ENCODE measurements at regions of chr7 and their contacts with region 1.

Region 1: GRCh38 chr7:25894902-25895791 is 256.9 kb upstream of the NFE2L3 start:
- DNase-seq: peak; percentile 17
- H3K4me3 ChIP-seq: no peak overlapping the region
- H3K27ac ChIP-seq: no peak overlapping the region
- H3K4me1 ChIP-seq: peaks cover 27% of the 10 kb centered on the region
- H3K27me3 ChIP-seq: no peaks in the 10 kb centered on the region
- CTCF ChIP-seq: peak; percentile 46 to 65

Region 2: DNA sequence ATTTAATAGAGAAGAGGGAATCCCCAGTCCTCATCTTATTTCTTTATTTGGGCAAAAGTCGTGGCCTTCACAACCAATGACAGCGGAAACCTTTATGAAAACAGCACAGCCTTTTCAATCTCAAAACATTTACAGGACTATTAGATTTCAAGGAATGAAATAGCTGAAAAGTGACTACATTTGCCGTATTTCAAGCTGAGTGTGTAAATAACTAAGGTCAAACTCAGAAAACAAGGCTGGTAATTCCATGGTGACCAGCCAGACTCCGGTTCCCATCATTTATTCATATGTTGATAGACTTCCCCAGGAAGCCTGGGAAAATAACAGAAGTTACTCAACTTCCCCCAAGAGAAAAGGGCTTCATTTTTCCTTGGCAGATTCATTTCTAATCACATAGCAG is 200.4 kb before region 1 on chr7:
- CTCF ChIA-PET with region 1: no interaction called
- dilution Hi-C with region 1: no loop called
- in situ Hi-C with region 1: no loop called
- intact Hi-C with region 1: no loop called
- DNase-seq: no peak
- H3K4me3 ChIP-seq: no peak overlapping the region
- H3K27ac ChIP-seq: no peak overlapping the region
- H3K4me1 ChIP-seq: no peaks in the 10 kb centered on the region
- H3K27me3 ChIP-seq: no peaks in the 10 kb centered on the region
- CTCF ChIP-seq: no peak

Region 3: DNA sequence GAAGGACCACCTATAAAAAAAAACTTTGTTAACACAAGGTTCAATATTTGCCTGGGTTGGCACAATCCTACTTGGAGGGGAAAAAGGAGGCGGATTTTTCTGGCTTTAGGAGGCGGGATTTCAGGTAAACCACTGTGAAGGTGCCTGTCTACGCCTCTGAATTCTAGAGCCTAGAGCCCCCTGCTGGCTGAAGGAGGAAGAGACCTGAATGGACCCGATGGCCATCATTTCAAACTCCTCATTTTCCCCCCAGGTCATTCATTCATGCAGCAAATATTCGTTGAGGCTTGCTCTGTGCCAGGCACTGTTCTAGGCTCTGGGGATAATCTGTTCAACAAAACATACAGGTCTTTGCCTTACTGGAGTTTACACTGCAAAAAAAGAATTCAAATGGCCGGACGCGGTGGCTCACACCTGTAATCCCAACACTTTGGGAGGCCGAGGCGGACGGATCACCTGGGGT is 166.6 kb after region 1 on chr7:
- CTCF ChIA-PET with region 1: no interaction called
- dilution Hi-C with region 1: no loop called
- in situ Hi-C with region 1: no loop called
- intact Hi-C with region 1: loop called (anchors 1 kb)
- DNase-seq: peak; percentile 56
- H3K4me3 ChIP-seq: no peak overlapping the region
- H3K27ac ChIP-seq: no peak overlapping the region
- H3K4me1 ChIP-seq: peaks cover 4% of the 10 kb centered on the region
- H3K27me3 ChIP-seq: no peaks in the 10 kb centered on the region
- CTCF ChIP-seq: peak; percentile 85 to 92

Region 4: DNA sequence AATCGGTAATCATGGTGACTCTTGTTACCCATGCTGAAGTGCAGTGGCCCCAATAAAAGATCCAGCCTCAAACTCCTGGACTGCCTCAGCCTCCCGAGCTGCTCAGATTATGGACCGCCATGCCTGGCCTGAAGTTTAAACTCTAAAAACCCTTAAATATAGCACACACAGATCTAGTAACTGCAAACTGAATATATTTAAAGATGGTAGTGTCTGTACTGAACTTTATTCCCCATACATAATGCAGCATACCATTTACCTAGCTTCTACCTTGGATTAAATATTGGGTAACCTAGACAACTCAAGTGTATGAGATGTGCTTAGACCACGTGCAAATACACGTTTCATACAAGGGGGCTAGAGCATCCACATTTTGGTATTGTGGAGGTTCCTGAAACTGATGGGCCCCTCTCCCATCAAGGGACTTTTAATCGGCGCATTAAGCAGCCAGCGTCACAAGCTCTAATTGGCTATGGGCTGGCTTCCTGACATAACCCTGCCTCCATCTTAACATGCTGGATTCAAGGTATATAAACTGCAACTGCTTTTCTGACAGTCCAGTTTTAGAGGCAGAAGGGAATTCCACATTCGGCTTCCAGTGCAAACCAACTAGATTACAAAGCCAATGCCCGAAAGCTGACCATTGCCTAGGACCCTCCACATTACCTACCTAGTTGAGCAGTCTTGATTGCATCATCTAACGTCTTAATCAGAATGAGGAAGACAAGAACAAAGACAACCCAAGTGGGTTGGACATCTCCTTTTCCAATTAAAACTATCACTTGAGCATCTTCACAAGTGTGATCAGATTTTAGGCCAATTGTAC is 292.4 kb after region 1 on chr7:
- CTCF ChIA-PET with region 1: no interaction called
- dilution Hi-C with region 1: no loop called
- in situ Hi-C with region 1: loop called in 1 of 2 experiments (anchors 10 kb)
- intact Hi-C with region 1: loop called (anchors 5 kb)
- DNase-seq: no peak
- H3K4me3 ChIP-seq: no peak overlapping the region
- H3K27ac ChIP-seq: no peak overlapping the region
- H3K4me1 ChIP-seq: no peaks in the 10 kb centered on the region
- H3K27me3 ChIP-seq: no peaks in the 10 kb centered on the region
- CTCF ChIP-seq: no peak

Region 5: DNA sequence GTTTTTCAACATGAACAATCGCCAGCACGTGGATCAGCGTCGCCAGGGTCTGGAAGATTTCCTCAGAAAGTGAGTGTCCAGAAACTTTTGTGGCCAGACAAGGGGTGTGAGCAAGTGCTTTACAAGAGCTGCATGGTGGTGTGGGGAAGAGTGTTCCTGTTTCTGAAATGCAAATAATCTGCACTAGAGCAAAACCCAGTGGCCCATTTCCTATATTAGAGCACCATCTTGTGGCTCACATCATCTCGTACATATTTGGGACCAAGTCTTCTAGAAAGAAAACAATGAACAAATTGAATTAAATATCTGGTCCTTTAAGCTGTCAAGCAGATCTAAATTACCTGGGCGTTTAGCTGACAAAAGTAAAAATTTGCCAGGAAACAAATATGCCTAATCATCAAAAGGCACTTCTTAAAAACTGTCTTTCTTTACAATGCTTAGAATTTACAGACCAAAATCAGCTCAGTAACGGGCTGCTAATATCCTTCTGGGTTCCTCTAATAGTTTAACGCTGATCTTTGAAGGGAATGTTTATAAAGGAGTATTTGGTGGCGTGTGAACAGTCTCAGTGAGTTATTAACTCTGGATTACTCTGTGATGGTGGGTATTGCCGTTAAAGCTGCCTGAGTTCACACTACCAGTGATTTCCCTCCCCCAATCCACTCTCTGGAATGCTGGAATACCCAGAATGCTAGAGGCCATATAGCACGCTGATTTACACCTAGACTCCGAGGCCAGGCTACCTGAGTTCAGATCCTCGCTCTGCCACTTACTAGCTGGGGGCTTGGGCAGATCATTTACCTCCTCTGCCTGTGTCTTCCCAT is 470.1 kb after region 1 on chr7:
- CTCF ChIA-PET with region 1: interaction called, 9 read pairs
- dilution Hi-C with region 1: no loop called
- in situ Hi-C with region 1: loop called (anchors 5 to 10 kb)
- intact Hi-C with region 1: loop called (anchors 1 kb)
- DNase-seq: peak; percentile 54
- H3K4me3 ChIP-seq: no peak overlapping the region
- H3K27ac ChIP-seq: no peak overlapping the region
- H3K4me1 ChIP-seq: peaks cover 2% of the 10 kb centered on the region
- H3K27me3 ChIP-seq: no peaks in the 10 kb centered on the region
- CTCF ChIP-seq: peak; percentile 63 to 75

Region 6: GRCh38 chr7:27143023-27143949 is 1248.1 kb after region 1 on chr7 and contains the start of gene HOXA5:
- CTCF ChIA-PET with region 1: no interaction called
- dilution Hi-C with region 1: no loop called
- in situ Hi-C with region 1: no loop called
- intact Hi-C with region 1: loop called (anchors 5 kb)
- DNase-seq: peak; percentile 99
- H3K4me3 ChIP-seq: peak within 1 kb of the TSS; percentile 70 to 81 (median 74)
- H3K27ac ChIP-seq: peak within 1 kb of the TSS; percentile 89
- H3K4me1 ChIP-seq: peaks cover 60% of the 10 kb centered on the region
- H3K27me3 ChIP-seq: no peaks in the 10 kb centered on the region
- CTCF ChIP-seq: peak; percentile 75 to 91
- total RNA-seq, gene HOXA5: 9.1 to 11.0 TPM